Activated CD4-positive, alpha-beta memory T cell treated with anti-CD3 and anti-CD28 coated beads, Interleukin-2, amount 10 ng/mL, durations not matched to agents 7 days and 5 days (primary cell): ENCODE measurements at regions of chr19 and their contacts with region 1.

Region 1: GRCh38 chr19:35748106-35749020 is at the start of gene LIN37:
- DNase-seq: peak; percentile 99
- H3K4me3 Mint-ChIP-seq: peak within 1 kb of the TSS; percentile 97
- H3K27ac Mint-ChIP-seq: peak within 1 kb of the TSS; percentile 90
- H3K4me1 Mint-ChIP-seq: peaks cover 53% of the 10 kb centered on the region
- H3K27me3 Mint-ChIP-seq: no peaks in the 10 kb centered on the region
- total RNA-seq, gene LIN37: 13.1 to 16.2 TPM

Region 2: GRCh38 chr19:35513628-35514281 is 234.6 kb before region 1 on chr19 and contains the start of gene DMKN:
- CTCF ChIA-PET with region 1: no interaction called
- POLR2A ChIA-PET with region 1: no interaction called
- DNase-seq: no peak
- H3K4me3 Mint-ChIP-seq: no peak within 1 kb of the TSS
- H3K27ac Mint-ChIP-seq: no peak within 1 kb of the TSS
- H3K4me1 Mint-ChIP-seq: peaks cover 14% of the 10 kb centered on the region
- H3K27me3 Mint-ChIP-seq: peaks cover 37% of the 10 kb centered on the region
- total RNA-seq, gene DMKN: not detected

Region 3: DNA sequence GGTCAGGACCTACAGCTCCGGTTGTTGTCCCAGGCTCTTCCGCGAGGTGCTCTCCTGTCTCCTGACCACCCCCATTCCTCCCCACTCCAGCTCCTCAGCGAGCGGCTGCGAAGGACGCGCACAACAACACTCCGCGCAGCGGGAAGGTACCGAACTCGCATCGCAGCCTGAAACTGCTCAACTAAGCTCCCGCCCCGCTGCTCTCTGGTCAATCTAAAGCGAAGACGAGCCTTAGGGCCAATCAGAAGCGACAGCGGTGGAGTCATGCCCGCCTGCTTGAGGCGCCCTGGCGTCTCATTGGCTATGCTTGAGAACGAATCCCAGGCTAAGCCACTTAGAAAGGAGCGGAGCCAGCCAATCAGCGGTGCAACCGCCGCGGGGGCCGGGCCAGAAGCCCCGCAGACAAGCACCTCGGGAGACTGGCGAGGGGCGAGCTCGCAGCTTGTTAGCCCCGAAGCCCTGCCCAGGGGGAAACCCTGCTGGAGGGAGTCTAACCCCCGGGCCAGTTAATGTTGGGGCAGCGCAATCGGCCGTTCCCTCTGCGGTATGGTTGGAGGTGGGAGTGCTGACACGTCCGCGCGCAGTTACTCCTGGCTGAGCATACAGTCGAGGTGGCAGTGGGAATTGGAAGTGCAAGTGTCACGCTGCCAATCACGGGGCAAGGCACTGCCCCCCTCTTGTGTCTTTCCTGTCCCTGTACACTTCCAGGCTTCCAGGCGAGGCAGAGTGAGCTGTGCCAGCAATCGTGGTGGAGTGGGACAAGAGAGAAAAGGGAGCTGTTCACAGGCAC is 45.9 kb before region 1 on chr19:
- CTCF ChIA-PET with region 1: interaction called, 4 read pairs
- POLR2A ChIA-PET with region 1: interaction called, 15 read pairs
- DNase-seq: peak; percentile 97
- H3K4me3 Mint-ChIP-seq: peak overlapping the region; percentile 90
- H3K27ac Mint-ChIP-seq: peak overlapping the region; percentile 98
- H3K4me1 Mint-ChIP-seq: peaks cover 19% of the 10 kb centered on the region
- H3K27me3 Mint-ChIP-seq: no peaks in the 10 kb centered on the region

Region 4: GRCh38 chr19:35710784-35711723 is 37.3 kb before region 1 on chr19:
- CTCF ChIA-PET with region 1: interaction called, 4 read pairs
- POLR2A ChIA-PET with region 1: interaction called, 46 read pairs
- DNase-seq: peak; percentile 72
- H3K4me3 Mint-ChIP-seq: peak overlapping the region; percentile 64
- H3K27ac Mint-ChIP-seq: peak overlapping the region; percentile 99
- H3K4me1 Mint-ChIP-seq: peaks cover 64% of the 10 kb centered on the region
- H3K27me3 Mint-ChIP-seq: no peaks in the 10 kb centered on the region

Region 5: GRCh38 chr19:35716801-35717666 is 31.3 kb before region 1 on chr19:
- CTCF ChIA-PET with region 1: interaction called, 5 read pairs
- POLR2A ChIA-PET with region 1: interaction called, 46 read pairs
- DNase-seq: peak; percentile 97
- H3K4me3 Mint-ChIP-seq: peak overlapping the region; percentile 92
- H3K27ac Mint-ChIP-seq: peak overlapping the region; percentile 99
- H3K4me1 Mint-ChIP-seq: peaks cover 60% of the 10 kb centered on the region
- H3K27me3 Mint-ChIP-seq: no peaks in the 10 kb centered on the region

Region 6: DNA sequence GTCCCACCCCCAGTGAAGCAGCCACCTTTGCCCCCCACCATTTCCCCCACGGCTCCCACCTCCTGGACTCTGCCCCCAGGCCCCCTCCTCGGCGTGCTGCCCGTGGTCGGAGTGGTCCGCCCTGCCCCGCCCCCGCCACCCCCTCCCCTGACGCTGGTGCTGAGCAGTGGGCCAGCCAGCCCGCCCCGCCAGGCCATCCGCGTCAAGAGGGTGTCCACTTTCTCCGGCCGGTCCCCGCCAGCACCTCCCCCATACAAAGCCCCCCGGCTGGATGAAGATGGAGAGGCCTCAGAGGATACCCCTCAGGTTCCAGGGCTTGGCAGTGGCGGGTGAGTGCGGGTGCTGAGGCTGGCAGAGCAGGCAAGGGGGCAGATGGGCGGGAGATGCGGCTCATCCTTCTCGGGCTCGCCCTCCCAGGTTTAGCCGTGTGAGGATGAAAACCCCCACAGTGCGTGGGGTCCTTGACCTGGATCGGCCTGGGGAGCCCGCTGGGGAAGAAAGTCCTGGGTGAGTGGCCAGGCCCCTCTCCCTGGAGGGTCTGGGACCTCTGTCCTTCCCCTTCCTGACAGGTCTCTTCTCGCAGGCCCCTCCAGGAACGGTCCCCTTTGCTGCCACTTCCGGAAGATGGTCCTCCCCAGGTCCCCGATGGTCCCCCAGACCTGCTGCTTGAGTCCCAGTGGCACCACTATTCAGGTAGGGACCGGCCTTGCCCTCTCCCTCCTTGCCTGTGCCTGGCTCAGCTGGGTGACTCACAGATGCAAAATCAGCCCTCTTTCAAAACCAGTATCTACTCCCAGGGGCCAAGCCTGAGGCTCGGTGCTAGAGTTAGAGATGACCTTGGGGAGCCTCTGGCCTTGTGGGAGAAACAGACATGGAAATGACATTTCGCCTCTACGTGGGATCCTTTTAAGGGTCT is 14.9 kb before region 1 on chr19:
- CTCF ChIA-PET with region 1: interaction called, 6 read pairs
- POLR2A ChIA-PET with region 1: interaction called, 13 read pairs
- DNase-seq: no peak
- H3K4me3 Mint-ChIP-seq: no peak overlapping the region
- H3K27ac Mint-ChIP-seq: peak overlapping the region; percentile 31
- H3K4me1 Mint-ChIP-seq: peaks cover 14% of the 10 kb centered on the region
- H3K27me3 Mint-ChIP-seq: no peaks in the 10 kb centered on the region

Region 7: GRCh38 chr19:35931161-35931873 is 183.0 kb after region 1 on chr19:
- CTCF ChIA-PET with region 1: interaction called, 18 read pairs
- POLR2A ChIA-PET with region 1: interaction called, 4 read pairs
- DNase-seq: peak; percentile 100
- H3K4me3 Mint-ChIP-seq: peak overlapping the region; percentile 62
- H3K27ac Mint-ChIP-seq: peak overlapping the region; percentile 91
- H3K4me1 Mint-ChIP-seq: peaks cover 40% of the 10 kb centered on the region
- H3K27me3 Mint-ChIP-seq: no peaks in the 10 kb centered on the region